G401 (cell line): ENCODE measurements at regions of chr3 and their contacts with region 1.

Region 1: GRCh38 chr3:197064771-197065170 is 35.2 kb upstream of the MELTF start:
- DNase-seq: no peak

Region 2: GRCh38 chr3:197103766-197104165 is 39.0 kb after region 1 on chr3:
- in situ Hi-C with region 1: loop called (anchors 5 kb)
- DNase-seq: no peak